Posterior vena cava (tissue), 2 donors: ENCODE measurements at regions of chr10 and their contacts with region 1.

Region 1: GRCh38 chr10:54525816-54526215 is 275.2 kb downstream of the PCDH15 start:
- DNase-seq: no peak

Region 2: GRCh38 chr10:54454271-54454670 is 71.5 kb before region 1 on chr10:
- intact Hi-C with region 1: loop called in 1 of 2 experiments (anchors 2 kb)
- DNase-seq: no peak